Activated CD8-positive, alpha-beta memory T cell treated with anti-CD3 and anti-CD28 coated beads, Interleukin-2, amount 10 ng/mL, durations not matched to agents 7 days and 5 days (primary cell): ENCODE measurements at regions of chr6 and their contacts with region 1.

Region 1: DNA sequence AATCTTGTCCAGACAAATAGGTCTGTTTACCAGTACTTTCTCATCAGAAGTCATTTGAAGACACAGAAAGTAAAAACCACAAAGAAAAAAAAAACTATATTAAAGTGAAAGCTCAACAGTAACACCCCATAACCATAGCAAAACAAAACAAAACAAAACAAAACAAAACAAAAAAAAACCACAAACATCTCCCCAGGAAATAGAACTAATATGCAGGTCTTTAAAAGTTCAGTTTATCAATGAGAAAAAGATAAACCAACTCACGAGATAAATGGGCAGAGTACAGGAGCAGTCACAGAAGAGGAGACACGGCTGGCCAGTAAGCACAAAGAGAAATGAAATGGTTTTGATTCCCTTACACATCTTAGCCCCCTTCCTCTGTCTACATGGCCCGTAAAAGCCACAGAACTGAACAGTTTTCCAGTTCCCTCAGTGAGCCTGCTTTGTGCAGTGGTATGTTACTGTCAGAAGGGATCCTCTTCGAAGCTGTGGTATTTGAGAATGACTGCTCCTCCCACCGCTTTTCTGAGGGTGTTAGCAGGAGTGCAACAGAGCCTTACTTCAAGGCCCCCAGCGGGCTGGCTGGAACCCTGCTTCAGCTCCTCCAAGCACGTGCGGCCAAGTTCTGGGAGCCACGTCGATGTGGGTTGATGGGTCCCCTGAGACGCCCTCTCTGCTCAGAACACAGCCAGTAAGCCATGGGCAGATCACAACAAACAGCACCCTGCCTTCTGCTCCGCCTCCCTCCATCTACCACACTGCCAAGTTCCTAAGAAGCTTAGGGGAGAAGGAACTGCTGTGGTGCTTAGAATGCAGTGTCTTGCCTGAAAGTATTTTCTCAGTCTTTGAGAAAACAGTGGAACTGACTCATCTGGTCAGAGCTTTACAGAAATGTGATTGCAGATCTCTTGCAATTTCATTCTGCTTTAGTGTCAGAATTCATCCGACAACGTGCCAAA is 14.0 kb downstream of the UST start:
- DNase-seq: peak; percentile 74
- ATAC-seq: peak; percentile 63
- H3K4me3 Mint-ChIP-seq: peak overlapping the region; percentile 59
- H3K27ac Mint-ChIP-seq: peak overlapping the region; percentile 74
- H3K4me1 Mint-ChIP-seq: peaks cover 51% of the 10 kb centered on the region
- H3K27me3 Mint-ChIP-seq: peaks cover 43% of the 10 kb centered on the region

Region 2: DNA sequence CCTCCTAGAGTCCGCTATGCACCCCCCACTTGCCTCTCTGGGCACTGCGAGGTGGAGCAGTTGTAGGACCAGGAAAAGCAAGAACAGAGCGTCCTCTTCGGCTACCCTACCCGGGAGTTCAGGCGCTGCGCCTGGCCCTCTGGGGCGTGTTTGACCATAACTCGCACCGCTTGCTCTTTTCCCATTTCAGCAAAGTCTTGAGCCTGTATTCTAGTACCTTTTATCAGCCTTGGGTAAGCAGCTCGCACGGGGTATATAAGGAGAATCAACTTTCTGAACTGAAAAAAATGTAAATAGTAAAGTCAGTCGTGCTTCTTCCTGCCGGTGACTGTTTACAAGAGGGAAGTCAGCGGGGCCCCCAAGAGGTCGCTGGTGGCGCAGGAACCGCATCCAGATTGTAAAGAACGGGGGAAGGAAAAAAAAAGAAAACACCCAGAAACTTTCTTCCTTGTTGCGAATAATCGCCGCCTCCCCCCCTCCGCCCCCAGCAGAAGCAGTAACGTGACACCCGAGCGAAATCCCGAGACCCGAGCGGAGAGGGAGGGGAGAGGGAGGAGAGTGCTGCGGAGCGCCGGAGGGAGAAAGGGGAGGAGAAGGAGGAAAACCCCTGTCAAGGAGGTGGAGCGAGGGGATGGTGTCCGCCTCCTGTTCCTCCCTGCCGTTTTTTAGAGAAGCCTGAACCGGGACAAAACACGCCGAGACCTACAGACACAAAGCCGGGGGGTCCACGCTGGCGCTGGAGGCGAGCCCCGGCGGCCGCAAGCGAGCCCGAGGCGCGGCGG is 14.3 kb before region 1 on chr6 and contains the start of gene UST:
- CTCF ChIA-PET with region 1: interaction called, 32 read pairs
- DNase-seq: peak; percentile 77
- ATAC-seq: peak; percentile 55
- H3K4me3 Mint-ChIP-seq: peak within 1 kb of the TSS; percentile 88
- H3K27ac Mint-ChIP-seq: peak within 1 kb of the TSS; percentile 71
- H3K4me1 Mint-ChIP-seq: peaks cover 30% of the 10 kb centered on the region
- H3K27me3 Mint-ChIP-seq: peaks cover 40% of the 10 kb centered on the region
- total RNA-seq, gene UST: 1.5 to 2.3 TPM

Region 3: DNA sequence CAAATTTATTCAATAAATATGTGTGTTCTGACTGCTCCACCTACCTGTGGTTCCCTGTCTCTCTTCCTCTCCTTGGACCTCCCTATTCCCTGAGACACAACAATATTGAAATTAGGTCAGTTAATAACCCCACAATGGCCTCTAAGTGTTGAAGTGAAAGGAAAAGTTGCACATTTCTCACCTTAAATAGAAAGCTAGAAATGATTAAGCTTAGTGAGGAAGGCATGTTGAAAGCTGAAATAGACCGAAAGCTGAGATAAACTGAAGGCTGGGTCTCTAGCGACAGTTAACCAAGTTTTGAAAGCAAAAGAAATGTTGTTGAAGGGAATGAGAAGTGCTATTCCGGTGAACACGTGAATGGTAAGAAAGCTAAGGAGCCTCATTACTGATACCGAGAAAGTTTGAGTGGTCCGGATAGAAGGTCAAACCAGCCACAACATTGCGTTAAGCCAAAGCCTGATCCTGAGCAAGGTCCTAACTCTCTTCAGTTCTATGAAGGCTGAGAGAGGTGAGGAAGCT is 20.1 kb after region 1 on chr6:
- CTCF ChIA-PET with region 1: interaction called, 12 read pairs
- DNase-seq: no peak
- ATAC-seq: peak; percentile 90
- H3K4me3 Mint-ChIP-seq: peak overlapping the region; percentile 55
- H3K27ac Mint-ChIP-seq: peak overlapping the region; percentile 77
- H3K4me1 Mint-ChIP-seq: peaks cover 27% of the 10 kb centered on the region
- H3K27me3 Mint-ChIP-seq: peaks cover 4% of the 10 kb centered on the region

Region 4: DNA sequence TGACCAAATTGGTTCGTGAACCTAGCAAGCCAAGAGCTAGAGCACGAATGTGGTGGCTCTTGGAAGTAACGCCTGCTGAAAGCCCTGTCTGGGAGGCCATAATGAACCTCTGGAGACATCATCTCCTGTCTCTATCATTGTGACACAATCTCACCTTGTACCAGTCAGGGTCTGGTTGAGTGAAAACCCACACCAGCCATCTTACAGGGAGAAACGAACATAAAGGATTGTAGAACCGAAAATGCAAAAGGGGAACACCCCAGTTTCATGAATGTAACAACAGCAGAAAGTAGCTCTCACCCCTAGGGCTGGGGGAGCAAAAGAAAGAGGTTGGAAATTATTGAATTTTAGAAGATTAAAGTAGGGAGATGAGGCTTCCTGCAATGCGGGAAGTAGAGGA is 505.8 kb after region 1 on chr6:
- CTCF ChIA-PET with region 1: no interaction called
- DNase-seq: no peak
- ATAC-seq: no peak
- H3K4me3 Mint-ChIP-seq: no peak overlapping the region
- H3K27ac Mint-ChIP-seq: no peak overlapping the region
- H3K4me1 Mint-ChIP-seq: peaks cover 27% of the 10 kb centered on the region
- H3K27me3 Mint-ChIP-seq: no peaks in the 10 kb centered on the region